AG04449 (cell line): ENCODE measurements at regions of chr10 and their contacts with region 1.

Region 1: DNA sequence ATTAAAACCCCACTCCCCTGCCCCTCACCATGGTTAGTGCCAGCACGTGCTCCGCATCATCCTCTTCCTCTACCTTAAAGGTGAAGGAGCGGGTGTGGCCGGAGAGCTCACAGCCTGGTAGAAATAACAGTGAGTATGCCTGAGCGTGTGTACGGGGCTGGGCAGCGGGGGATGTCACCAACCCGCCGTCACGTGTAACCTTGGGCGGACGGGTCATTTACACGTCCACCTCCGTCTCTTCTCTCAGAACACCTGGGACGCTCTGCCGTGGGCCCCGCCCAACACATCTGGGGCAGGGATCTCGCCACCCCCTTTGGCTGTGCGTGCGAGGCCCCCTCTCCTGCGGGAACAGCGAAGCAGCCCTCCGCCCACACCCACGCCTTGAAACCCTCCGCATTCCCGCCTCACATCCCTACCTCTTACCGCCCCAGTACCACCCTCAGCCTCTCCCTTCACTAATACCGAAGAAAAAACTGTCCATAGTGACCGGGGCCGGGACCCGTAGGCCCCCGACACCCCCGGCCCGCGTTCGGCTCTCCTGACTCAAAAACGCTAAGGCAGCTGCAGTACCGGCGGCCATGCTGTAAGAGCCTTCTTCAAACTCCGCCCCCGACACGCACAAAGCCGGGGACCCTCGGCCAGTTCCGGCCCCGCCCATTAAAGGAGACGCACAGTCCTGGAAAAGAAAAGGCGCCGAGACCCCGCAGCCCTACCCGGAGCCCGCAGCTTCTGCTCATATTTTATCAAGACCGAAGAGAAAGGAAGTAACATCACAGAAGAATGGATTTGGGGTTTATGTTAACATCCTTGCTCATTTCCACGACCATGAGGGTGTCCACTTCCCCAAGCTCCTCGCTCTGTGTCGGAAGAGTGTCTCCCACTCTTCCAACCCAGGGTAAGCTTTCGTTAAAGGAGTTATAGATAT is at the start of gene NPM3:
- DNase-seq: no peak
- H3K4me3 ChIP-seq: peak within 1 kb of the TSS; percentile 84
- CTCF ChIP-seq: no peak

Region 2: GRCh38 chr10:101595591-101596433 is 187.3 kb before region 1 on chr10:
- CTCF ChIA-PET with region 1: interaction called, 265 read pairs
- POLR2A ChIA-PET with region 1: no interaction called
- DNase-seq: no peak
- H3K4me3 ChIP-seq: no peak overlapping the region
- CTCF ChIP-seq: no peak

Region 3: GRCh38 chr10:101759309-101760247 is 23.5 kb before region 1 on chr10:
- CTCF ChIA-PET with region 1: interaction called, 28 read pairs
- POLR2A ChIA-PET with region 1: no interaction called
- DNase-seq: no peak
- H3K4me3 ChIP-seq: no peak overlapping the region
- CTCF ChIP-seq: no peak

Region 4: GRCh38 chr10:101797403-101798059 is 14.5 kb after region 1 on chr10:
- CTCF ChIA-PET with region 1: interaction called, 91 read pairs
- POLR2A ChIA-PET with region 1: no interaction called
- DNase-seq: no peak
- H3K4me3 ChIP-seq: no peak overlapping the region
- CTCF ChIP-seq: no peak

Region 5: DNA sequence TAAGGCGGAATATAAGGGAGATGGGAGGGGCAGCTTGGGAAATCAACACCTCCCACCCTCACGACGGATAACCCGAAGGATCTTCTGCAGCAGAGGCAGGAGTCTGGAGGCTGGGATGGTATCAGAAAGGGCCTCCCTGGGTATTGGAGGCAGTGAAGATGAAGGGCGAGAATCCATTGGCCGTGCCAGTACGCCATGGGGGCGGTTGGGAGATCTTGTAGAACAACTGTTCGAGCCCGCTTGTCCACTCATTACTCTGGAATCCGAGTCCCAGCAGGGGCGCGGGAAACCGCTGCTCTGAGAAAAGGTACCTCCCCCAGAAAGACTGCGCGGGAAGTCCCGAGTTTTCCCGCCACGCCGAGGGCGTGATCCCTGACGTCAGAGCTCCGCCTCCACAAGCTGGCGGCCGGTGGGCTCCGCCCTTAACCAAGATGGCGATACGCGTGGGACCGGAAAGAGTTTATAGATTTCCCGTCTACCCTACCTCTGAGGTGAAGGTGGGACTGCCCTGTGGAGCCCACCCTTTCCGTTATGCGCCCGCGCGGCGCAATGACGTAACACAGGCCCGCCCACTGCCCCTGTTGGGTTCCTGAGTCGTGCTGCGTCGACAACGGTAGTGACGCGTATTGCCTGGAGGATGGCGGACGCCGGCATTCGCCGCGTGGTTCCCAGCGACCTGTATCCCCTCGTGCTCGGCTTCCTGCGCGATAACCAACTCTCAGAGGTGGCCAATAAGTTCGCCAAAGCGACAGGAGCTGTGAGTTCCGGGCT is 368.9 kb after region 1 on chr10 and contains the start of gene NOLC1:
- CTCF ChIA-PET with region 1: no interaction called
- POLR2A ChIA-PET with region 1: no interaction called
- DNase-seq: peak; percentile 96
- H3K4me3 ChIP-seq: peak within 1 kb of the TSS; percentile 99
- CTCF ChIP-seq: no peak